CD4-positive, alpha-beta memory T cell (primary cell): ENCODE measurements at regions of chr11 and their contacts with region 1.

Region 1: DNA sequence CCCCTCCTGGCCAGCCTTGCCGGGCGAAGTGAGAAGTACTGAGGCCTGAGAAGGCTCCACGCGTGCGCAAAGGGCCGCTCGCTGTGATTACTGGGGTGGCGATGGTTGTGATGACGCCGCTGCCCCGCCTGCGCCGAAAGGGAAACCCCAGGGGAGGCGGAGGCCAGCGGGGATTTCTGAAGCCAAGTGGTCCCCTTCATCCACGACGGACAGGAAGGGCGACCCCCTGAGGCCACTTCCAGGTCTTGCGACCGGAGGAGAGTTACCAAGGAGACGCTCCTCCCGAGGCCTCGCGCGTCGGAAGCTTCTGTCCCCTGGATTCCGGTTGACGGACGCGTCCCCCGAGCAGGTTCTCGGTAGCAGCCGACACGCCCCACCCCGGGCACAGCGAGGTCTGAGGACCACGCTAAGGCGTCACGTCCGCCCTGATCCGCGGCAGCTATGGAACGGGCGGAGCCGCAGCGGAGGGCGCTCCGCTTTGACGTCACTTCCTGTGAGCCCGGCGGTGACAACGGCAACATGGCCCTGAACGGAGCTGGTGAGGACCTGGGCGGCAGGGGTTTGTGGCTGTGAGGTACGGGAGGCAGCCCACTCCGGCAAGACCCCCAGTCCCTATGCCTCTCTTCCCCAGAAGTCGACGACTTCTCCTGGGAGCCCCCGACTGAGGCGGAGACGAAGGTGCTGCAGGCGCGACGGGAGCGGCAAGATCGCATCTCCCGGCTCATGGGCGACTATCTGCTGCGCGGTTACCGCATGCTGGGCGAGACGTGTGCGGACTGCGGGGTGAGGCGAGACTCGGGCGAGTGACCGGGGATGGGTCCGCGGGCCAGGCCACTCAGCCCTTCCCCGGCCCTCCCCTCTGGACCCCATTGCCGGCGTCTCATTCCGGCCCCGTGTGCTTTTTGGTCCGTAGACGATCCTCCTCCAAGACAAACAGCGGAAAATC is at the start of gene ZNRD2:
- DNase-seq: peak; percentile 98 to 99 (median 99)
- H3K4me3 ChIP-seq: peak within 1 kb of the TSS; percentile 71 to 94
- H3K4me3 Mint-ChIP-seq: peak within 1 kb of the TSS; percentile 97 to 100 (median 98)
- H3K27ac ChIP-seq: peak within 1 kb of the TSS; percentile 99
- H3K27ac Mint-ChIP-seq: peak within 1 kb of the TSS; percentile 99 to 100 (median 99)
- H3K4me1 ChIP-seq: peaks cover 75% of the 10 kb centered on the region
- H3K4me1 Mint-ChIP-seq: peaks cover 44 to 92% (median 65%) of the 10 kb centered on the region in 4 donors
- H3K27me3 ChIP-seq: no peaks in the 10 kb centered on the region
- H3K27me3 Mint-ChIP-seq: peaks cover 0 to 3% of the 10 kb centered on the region in 2 donors
- total RNA-seq, gene ZNRD2: 24.6 to 27.5 TPM

Region 2: GRCh38 chr11:65425105-65425970 is 144.9 kb before region 1 on chr11:
- CTCF ChIA-PET with region 1: no interaction called
- POLR2A ChIA-PET with region 1: interaction called, 59 read pairs
- intact Hi-C with region 1: loop called (anchors 5 kb)
- DNase-seq: peak; percentile 87 to 98 (median 94)
- H3K4me3 ChIP-seq: peak overlapping the region; percentile 95 to 99
- H3K4me3 Mint-ChIP-seq: peak overlapping the region; percentile 92 to 97 (median 95)
- H3K27ac ChIP-seq: peak overlapping the region; percentile 98
- H3K27ac Mint-ChIP-seq: peak overlapping the region; percentile 93 to 100 (median 97)
- H3K4me1 ChIP-seq: peaks cover 50% of the 10 kb centered on the region
- H3K4me1 Mint-ChIP-seq: peaks cover 41 to 83% (median 47%) of the 10 kb centered on the region in 4 donors
- H3K27me3 ChIP-seq: no peaks in the 10 kb centered on the region
- H3K27me3 Mint-ChIP-seq: peaks cover 0 to 4% of the 10 kb centered on the region in 2 donors

Region 3: GRCh38 chr11:65540297-65541092 is 29.8 kb before region 1 on chr11:
- CTCF ChIA-PET with region 1: interaction called, 66 read pairs
- POLR2A ChIA-PET with region 1: interaction called, 181 read pairs
- intact Hi-C with region 1: loop called (anchors 1 kb)
- DNase-seq: peak; percentile 90 to 95 (median 91)
- H3K4me3 ChIP-seq: peak overlapping the region; percentile 73 to 91
- H3K4me3 Mint-ChIP-seq: peak overlapping the region; percentile 82 to 90 (median 87)
- H3K27ac ChIP-seq: peak overlapping the region; percentile 55
- H3K27ac Mint-ChIP-seq: peak overlapping the region; percentile 81 to 95 (median 87)
- H3K4me1 ChIP-seq: peaks cover 17% of the 10 kb centered on the region
- H3K4me1 Mint-ChIP-seq: peaks cover 12 to 36% (median 16%) of the 10 kb centered on the region in 4 donors
- H3K27me3 ChIP-seq: no peaks in the 10 kb centered on the region
- H3K27me3 Mint-ChIP-seq: no peaks in the 10 kb centered on the region

Region 4: DNA sequence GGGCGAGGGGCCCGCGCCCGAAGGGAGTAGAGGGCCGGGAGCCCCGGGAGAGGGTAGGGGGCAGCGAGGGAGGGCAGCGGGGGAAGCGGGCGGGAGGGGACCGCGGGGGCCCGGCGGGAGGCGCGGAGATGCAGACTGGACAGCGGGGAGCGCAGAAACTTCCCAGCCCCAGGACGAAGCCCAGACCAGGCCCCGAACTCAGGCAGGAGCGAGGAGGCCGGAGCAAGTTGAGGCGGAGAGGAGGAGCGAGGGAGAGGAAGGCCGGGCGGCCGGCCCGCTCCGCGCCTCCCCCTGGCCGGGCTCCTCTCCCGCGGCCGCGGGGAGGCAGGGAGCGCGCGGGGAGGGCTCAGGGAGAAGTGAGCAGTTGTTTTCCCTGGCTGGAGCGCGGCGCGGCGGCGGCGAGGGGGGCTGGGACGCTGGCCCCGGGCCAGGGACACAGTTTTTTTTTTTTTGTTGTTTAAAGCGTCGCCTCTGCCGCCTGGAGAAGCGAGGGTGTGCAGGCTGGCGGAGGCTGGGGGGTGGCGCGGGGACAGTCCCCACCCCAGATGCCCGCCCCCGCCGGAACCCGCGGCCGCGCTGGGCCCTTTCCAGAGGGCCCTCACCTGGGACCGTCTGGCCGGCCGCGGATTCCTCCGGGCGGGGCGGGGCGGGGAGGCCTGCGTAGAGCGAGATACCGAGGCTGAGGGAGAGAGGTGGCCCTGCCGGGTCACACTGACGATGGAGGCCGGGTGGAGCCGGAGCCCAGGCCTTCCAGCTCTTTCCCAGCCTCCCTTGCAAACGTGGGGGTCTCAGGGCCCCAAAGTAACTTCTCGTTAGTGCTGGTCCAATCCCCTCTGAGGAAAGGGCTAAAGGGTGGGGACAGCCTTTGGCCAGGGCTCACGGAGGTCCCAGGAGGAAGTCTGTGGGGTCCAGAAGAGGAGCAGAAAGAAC is 12.0 kb before region 1 on chr11 and contains the start of gene LTBP3:
- CTCF ChIA-PET with region 1: interaction called, 26 read pairs
- POLR2A ChIA-PET with region 1: interaction called, 403 read pairs
- intact Hi-C with region 1: loop called (anchors 1 kb)
- DNase-seq: peak in 3 of 5 donors; percentile 42 to 54 (median 44)
- H3K4me3 ChIP-seq: peak within 1 kb of the TSS; percentile 52
- H3K4me3 Mint-ChIP-seq: peak within 1 kb of the TSS; percentile 87 to 94 (median 91)
- H3K27ac ChIP-seq: peak within 1 kb of the TSS; percentile 70
- H3K27ac Mint-ChIP-seq: peak within 1 kb of the TSS; percentile 85 to 97 (median 93)
- H3K4me1 ChIP-seq: peaks cover 65% of the 10 kb centered on the region
- H3K4me1 Mint-ChIP-seq: peaks cover 39 to 66% (median 53%) of the 10 kb centered on the region in 4 donors
- H3K27me3 ChIP-seq: no peaks in the 10 kb centered on the region
- H3K27me3 Mint-ChIP-seq: no peaks in the 10 kb centered on the region
- total RNA-seq, gene LTBP3: 201 to 211 TPM

Region 5: DNA sequence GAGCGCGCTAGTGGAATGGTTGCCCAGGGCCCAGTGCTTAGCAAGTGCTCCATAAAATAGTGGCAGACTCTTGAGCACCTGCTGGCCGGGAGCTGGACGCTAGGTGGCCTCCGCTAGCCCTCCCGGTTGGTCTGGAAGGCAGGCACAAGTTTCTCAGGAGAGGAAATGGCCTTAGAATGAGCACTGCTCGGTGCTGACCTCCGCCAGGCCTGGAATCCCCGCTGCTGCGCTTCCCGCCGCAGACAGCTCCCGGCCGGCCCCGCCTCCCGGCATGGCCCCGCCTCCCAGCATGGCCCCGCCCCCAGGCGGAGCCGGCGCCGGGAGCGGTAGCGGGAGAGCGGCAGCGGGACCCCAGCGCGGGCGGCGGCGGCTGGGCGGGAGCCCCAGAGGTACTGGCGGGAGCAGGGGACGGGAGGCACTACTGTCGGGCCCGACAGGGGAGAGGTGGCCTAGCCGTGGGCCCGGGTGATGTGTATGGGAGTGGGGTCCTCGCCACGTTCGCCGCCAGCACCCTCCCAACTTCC is 67.6 kb after region 1 on chr11 and contains the start of gene SIPA1:
- CTCF ChIA-PET with region 1: no interaction called
- POLR2A ChIA-PET with region 1: interaction called, 17 read pairs
- intact Hi-C with region 1: no loop called
- DNase-seq: peak; percentile 63 to 85 (median 74)
- H3K4me3 ChIP-seq: peak within 1 kb of the TSS; percentile 72 to 86
- H3K4me3 Mint-ChIP-seq: peak within 1 kb of the TSS; percentile 90 to 98 (median 96)
- H3K27ac ChIP-seq: peak within 1 kb of the TSS; percentile 94
- H3K27ac Mint-ChIP-seq: peak within 1 kb of the TSS; percentile 97 to 100 (median 99)
- H3K4me1 ChIP-seq: peaks cover 71% of the 10 kb centered on the region
- H3K4me1 Mint-ChIP-seq: peaks cover 24 to 68% (median 46%) of the 10 kb centered on the region in 4 donors
- H3K27me3 ChIP-seq: no peaks in the 10 kb centered on the region
- H3K27me3 Mint-ChIP-seq: no peaks in the 10 kb centered on the region
- total RNA-seq, gene SIPA1: 150 to 169 TPM

Region 6: GRCh38 chr11:65821116-65821515 is 250.9 kb after region 1 on chr11:
- CTCF ChIA-PET with region 1: no interaction called
- POLR2A ChIA-PET with region 1: no interaction called
- intact Hi-C with region 1: no loop called
- DNase-seq: no peak
- H3K4me3 ChIP-seq: no peak overlapping the region
- H3K4me3 Mint-ChIP-seq: no peak overlapping the region
- H3K27ac ChIP-seq: no peak overlapping the region
- H3K27ac Mint-ChIP-seq: peak overlapping the region in 1 of 7 donors; percentile 21
- H3K4me1 ChIP-seq: peaks cover 12% of the 10 kb centered on the region
- H3K4me1 Mint-ChIP-seq: peaks cover 6 to 16% (median 10%) of the 10 kb centered on the region in 4 donors
- H3K27me3 ChIP-seq: no peaks in the 10 kb centered on the region
- H3K27me3 Mint-ChIP-seq: no peaks in the 10 kb centered on the region